Endothelial cell of umbilical vein (primary cell): ENCODE measurements at regions of chr19 and their contacts with region 1.

Region 1: DNA sequence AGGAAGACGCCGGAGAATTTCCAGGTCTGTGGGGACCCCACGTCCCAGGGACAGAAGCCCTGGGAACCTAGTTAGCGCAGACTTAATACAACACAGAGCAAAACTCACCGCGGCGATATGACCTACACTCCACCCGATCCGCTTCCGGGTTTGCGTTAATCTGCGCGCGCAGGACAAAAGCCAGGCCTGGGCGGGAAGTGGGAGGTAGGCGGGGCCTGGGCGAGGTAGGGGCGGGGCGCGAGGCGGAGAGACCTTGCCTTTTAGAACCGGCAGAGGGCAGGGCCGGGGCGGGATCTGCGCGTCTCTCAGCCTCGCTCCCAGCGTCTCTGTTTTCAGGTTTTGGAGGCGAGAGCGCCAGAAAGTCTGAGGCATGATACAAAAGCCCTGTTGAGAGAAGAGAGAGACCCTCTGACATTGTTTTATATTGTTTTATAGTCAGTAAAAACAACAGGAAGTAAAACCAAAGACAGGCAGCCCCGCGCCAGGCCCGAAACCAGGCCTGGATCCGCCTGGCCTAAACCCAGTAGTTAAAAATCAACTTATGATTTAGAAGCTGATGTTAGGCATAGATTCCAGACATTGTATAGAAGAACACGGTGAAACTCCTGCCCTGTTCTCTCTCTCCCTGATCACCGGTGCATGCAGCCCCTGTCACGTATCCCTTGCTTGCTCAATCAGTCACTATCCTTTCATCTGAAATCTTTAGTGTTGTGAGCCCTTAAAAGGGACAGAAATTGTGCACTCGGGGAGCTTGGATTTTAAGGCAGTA is at the start of gene ZNF611:
- DNase-seq: peak; percentile 97
- H3K4me3 ChIP-seq: peak within 1 kb of the TSS; percentile 47 to 96 (median 93)
- H3K27ac ChIP-seq: peak within 1 kb of the TSS; percentile 84
- H3K4me1 ChIP-seq: peaks cover 9% of the 10 kb centered on the region
- H3K27me3 ChIP-seq: no peaks in the 10 kb centered on the region
- CTCF ChIP-seq: peak; percentile 55 to 73
- POLR2A ChIP-seq: peak; percentile 90
- total RNA-seq, gene ZNF611: 20.0 and 24.2 TPM in 2 replicates

Region 2: DNA sequence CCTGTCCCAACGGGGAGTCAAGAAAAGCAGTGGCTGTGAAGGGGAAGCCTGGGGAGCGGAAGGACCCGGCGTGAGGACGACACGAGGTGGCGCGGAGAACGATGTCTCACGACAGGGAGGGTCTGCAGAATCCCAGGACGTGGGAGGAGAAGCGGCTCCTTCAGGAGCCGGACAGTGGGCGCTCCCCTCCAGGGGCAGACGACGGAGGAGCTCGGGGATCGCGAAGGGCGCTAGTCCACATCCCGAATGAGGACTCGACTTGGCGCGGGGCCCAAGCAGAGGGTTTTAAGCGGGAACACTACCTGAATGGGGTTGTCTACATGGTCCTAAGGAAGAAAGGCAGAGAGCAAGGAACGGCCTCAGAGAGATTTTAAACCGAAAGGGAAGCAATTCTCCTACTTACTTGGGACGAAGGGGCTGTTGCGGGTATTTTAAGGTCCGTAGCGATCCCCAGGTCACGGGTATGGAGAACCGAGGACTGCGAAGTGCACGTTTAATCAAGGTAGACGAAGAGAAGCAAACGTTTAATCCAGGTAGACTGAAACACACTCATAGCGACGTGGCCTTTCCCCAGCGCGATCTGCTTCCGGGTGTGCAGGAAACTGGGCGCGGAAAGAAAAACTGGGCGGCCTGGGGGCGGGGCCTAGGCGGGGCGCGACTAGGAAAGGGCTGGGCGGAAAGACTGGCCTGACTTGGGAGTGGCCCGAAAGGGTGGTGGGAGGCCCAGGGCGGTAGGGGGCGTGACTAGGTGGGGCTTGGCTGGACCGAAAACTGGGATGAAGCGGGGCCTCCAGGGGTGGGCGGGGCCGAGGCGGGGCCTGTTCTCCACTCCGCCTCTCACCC is 639.7 kb before region 1 on chr19 and contains the start of gene ZNF841:
- CTCF ChIA-PET with region 1: no interaction called
- POLR2A ChIA-PET with region 1: no interaction called
- dilution Hi-C with region 1: no loop called
- intact Hi-C with region 1: loop called (anchors 1 kb)
- DNase-seq: peak; percentile 96
- H3K4me3 ChIP-seq: peak within 1 kb of the TSS; percentile 47 to 94 (median 70)
- H3K27ac ChIP-seq: peak within 1 kb of the TSS; percentile 62
- H3K4me1 ChIP-seq: peaks cover 2% of the 10 kb centered on the region
- H3K27me3 ChIP-seq: no peaks in the 10 kb centered on the region
- CTCF ChIP-seq: no peak
- POLR2A ChIP-seq: peak; percentile 63
- total RNA-seq, gene ZNF841: 17.7 and 18.6 TPM in 2 replicates

Region 3: GRCh38 chr19:52397310-52398080 is 337.6 kb before region 1 on chr19 and contains the start of gene ZNF528:
- CTCF ChIA-PET with region 1: no interaction called
- POLR2A ChIA-PET with region 1: no interaction called
- dilution Hi-C with region 1: no loop called
- intact Hi-C with region 1: loop called (anchors 1 kb)
- DNase-seq: peak; percentile 92
- H3K4me3 ChIP-seq: peak within 1 kb of the TSS; percentile 14 to 73 (median 49)
- H3K27ac ChIP-seq: peak within 1 kb of the TSS; percentile 42
- H3K4me1 ChIP-seq: no peaks in the 10 kb centered on the region
- H3K27me3 ChIP-seq: no peaks in the 10 kb centered on the region
- CTCF ChIP-seq: no peak
- POLR2A ChIP-seq: peak; percentile 84
- total RNA-seq, gene ZNF528: 11.3 and 16.1 TPM in 2 replicates

Region 4: DNA sequence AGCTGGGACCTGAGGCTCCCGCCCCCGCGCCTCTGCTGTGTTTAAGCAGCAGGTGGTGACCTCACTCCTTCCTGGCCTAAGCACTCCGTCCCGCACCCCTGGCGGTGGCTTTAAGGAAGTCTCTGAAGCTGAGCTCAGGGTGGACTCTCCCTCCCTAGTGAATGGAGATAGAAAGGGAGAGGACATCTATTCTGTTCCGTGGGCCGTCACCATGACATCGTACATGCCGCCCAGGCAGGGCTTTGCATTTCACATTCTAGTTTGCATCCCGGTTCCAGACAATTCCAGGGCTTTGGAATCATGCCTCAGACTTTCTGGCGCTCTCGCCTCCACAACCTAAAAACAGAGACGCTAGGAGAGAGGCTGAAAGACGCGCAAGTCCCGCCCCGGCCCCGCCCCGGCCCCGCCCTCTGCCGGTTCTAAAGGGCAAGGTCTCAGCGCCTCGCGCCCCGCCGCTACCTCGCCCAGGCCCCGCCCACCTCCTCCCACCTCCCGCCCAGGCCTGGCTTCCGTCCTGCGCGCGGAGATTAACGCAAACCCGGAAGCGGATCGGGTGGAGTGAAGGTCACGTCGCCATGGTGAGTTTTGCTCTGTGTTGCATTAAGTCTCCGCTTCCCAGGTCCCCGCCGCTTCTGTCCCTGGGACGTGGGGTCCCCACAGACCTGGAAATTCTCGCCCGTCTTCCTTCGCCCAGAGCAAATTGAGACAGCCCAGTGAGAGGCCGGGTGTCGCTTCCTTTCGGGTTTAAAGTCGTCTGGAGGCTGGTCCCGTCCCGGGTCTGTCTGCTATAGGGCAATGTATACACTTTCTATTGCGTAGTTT is 207.7 kb before region 1 on chr19 and contains the start of gene ZNF808:
- CTCF ChIA-PET with region 1: no interaction called
- POLR2A ChIA-PET with region 1: no interaction called
- dilution Hi-C with region 1: no loop called
- intact Hi-C with region 1: no loop called
- DNase-seq: peak; percentile 88
- H3K4me3 ChIP-seq: peak within 1 kb of the TSS; percentile 70 to 86 (median 83)
- H3K27ac ChIP-seq: peak within 1 kb of the TSS; percentile 78
- H3K4me1 ChIP-seq: peaks cover 3% of the 10 kb centered on the region
- H3K27me3 ChIP-seq: no peaks in the 10 kb centered on the region
- CTCF ChIP-seq: peak; percentile 59 to 61
- POLR2A ChIP-seq: peak; percentile 78
- total RNA-seq, gene ZNF808: 13.6 and 15.2 TPM in 2 replicates

Region 5: DNA sequence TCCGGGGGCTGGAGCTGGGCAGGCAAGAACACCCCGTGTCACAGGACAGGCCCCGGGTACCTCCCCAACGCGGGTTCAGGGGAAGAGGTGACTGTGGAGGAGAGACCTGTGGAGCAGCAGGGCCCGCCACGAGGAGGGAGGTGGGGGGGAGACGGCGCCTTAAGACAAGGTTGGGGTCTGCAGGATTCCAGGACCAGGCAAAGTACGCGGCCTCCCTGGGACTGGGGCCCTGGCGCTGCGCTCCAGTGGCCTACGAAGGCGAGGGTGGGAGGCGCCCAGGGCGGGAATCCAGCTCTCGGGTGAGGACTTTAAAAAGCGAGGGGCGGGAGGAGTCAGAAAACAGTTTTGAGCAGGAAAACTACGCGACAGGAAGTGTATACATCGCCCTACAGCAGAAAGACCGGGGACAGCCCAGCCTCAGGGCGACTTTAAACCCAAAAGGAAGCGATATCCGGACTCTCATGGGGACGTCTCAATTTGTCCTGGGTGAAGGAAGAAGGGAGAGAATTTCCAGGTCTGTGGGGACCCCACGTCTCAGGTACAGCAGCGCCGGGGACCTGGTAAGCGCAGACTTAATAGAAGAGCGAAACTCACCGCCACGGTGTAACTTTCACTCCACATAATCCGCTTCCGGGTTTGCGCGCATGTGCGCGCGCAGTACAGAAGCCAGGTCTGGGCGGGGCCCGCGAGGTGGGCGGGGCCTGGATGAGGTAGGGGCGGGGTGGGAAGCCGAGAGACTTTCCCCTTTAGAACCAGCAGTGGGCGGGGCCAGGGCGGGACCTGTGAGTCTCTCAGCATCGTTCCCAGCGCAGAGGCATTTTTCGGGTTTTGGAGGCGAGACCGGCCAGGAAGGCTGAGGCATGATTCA is 97.1 kb before region 1 on chr19 and contains the start of gene ZNF83:
- CTCF ChIA-PET with region 1: no interaction called
- POLR2A ChIA-PET with region 1: no interaction called
- dilution Hi-C with region 1: no loop called
- intact Hi-C with region 1: loop called (anchors 1 kb)
- DNase-seq: peak; percentile 95
- H3K4me3 ChIP-seq: peak within 1 kb of the TSS; percentile 63 to 79 (median 72)
- H3K27ac ChIP-seq: peak within 1 kb of the TSS; percentile 56
- H3K4me1 ChIP-seq: peaks cover 10% of the 10 kb centered on the region
- H3K27me3 ChIP-seq: no peaks in the 10 kb centered on the region
- CTCF ChIP-seq: no peak
- POLR2A ChIP-seq: peak; percentile 94
- total RNA-seq, gene ZNF83: 39.3 and 41.4 TPM in 2 replicates

Region 6: DNA sequence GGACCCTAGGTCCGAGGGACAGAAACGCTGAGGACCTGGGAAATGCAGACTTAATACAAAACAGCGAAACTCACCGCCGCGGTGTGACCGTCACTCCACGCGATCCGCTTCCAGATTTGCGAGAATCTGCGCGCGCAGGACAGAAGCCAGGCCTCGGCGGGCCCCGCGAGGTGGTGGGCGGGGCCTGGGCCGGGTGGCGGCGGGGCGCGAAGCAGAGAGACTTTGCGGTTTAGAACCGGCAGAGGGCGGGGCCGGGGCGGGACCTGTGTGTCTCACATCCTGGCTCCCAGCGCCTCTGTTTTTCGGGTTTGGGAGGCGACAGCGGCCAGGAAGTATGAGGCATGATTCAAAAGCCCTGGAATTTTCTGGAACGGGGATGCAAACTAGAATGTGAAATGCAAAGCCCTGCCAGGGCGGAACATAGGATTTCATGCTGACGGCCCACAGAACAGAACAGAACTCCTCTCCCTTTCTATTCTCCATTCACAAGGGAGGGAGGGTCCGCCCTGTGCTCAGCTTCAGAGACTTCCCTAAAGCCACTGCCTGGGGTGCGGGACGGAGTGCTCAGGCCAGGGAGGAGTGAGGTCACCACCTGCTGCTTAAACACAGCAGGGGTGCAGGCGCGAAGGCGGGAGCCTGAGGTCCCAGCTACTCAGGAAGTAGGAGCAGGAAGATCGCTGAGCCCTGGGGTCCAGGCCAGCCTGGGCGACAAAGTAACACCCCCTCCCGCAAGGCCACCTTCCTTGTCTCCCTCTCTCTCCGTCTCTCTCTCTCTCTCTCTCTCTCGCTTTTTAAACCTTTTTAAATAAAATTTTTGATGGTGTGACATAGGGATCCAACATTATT is 44.5 kb before region 1 on chr19:
- CTCF ChIA-PET with region 1: no interaction called
- POLR2A ChIA-PET with region 1: no interaction called
- dilution Hi-C with region 1: no loop called
- intact Hi-C with region 1: loop called (anchors 1 kb)
- DNase-seq: peak; percentile 94
- H3K4me3 ChIP-seq: peak overlapping the region; percentile 88 to 97 (median 93)
- H3K27ac ChIP-seq: peak overlapping the region; percentile 88
- H3K4me1 ChIP-seq: peaks cover 9% of the 10 kb centered on the region
- H3K27me3 ChIP-seq: no peaks in the 10 kb centered on the region
- CTCF ChIP-seq: peak in 1 of 2 donors; percentile 5
- POLR2A ChIP-seq: peak; percentile 89

Region 7: GRCh38 chr19:52897144-52897935 is 162.3 kb after region 1 on chr19 and contains the start of gene ZNF320:
- CTCF ChIA-PET with region 1: no interaction called
- POLR2A ChIA-PET with region 1: no interaction called
- dilution Hi-C with region 1: no loop called
- intact Hi-C with region 1: loop called (anchors 5 kb)
- DNase-seq: peak; percentile 96
- H3K4me3 ChIP-seq: peak within 1 kb of the TSS; percentile 83 to 99 (median 97)
- H3K27ac ChIP-seq: peak within 1 kb of the TSS; percentile 89
- H3K4me1 ChIP-seq: peaks cover 6% of the 10 kb centered on the region
- H3K27me3 ChIP-seq: no peaks in the 10 kb centered on the region
- CTCF ChIP-seq: no peak
- POLR2A ChIP-seq: peak; percentile 69
- total RNA-seq, gene ZNF320: 10.9 and 11.1 TPM in 2 replicates

Region 8: GRCh38 chr19:52962394-52963246 is 227.5 kb after region 1 on chr19 and contains the start of gene ZNF816:
- CTCF ChIA-PET with region 1: no interaction called
- POLR2A ChIA-PET with region 1: no interaction called
- dilution Hi-C with region 1: no loop called
- intact Hi-C with region 1: loop called (anchors 10 kb)
- DNase-seq: peak; percentile 96
- H3K4me3 ChIP-seq: peak within 1 kb of the TSS; percentile 74 to 83 (median 77)
- H3K27ac ChIP-seq: peak within 1 kb of the TSS; percentile 56
- H3K4me1 ChIP-seq: peaks cover 4% of the 10 kb centered on the region
- H3K27me3 ChIP-seq: no peaks in the 10 kb centered on the region
- CTCF ChIP-seq: no peak
- POLR2A ChIP-seq: peak; percentile 87
- total RNA-seq, gene ZNF816: 4.9 and 5.3 TPM in 2 replicates